WTC11 (cell line): ENCODE measurements at regions of chr20 and their contacts with region 1.

Region 1: DNA sequence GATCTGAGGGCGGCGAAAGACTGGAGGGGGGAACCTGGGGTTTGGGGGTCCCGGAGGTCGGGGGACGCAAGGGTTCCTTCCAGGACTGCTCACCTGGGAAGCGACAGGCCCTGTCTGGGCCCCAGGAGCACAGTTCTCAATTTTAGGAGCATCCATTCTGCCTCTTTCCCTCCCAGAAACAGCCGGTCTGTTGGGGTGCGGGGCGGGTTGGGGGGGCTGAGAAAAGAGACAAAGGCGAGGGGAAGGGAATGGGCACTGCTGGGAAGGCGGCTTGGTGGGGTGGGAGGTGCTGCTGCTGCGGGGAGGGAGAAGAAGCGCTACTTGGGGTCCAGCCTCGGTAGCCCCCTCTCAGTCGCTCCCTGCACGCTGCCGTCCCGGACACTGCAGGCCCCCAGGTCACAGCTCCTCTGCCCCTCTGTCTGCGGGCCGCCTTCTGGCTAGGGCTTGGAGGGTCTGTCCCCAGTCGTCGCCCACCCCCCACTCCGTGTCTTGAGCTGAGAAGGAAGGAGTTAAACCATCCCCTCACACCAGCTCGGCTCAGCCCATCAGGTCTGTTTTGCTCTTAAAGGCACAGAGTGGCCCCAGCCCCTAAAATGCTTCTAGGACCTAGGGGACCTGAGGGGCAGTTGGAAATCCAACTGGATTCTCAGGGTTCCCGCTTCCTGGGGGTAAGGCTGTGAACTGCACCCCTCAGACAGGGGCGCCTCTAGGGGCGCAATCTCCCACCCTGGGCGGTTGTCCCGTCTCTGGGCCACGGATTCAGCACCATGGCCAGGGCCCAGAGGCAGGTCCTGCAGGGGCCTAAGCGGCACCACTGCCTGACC is 690 bp downstream of the GDAP1L1 start:
- DNase-seq: peak; percentile 91
- ATAC-seq: peak; percentile 92
- H3K4me3 Mint-ChIP-seq: peak overlapping the region; percentile 78
- H3K27ac Mint-ChIP-seq: no peak overlapping the region
- H3K4me1 Mint-ChIP-seq: peaks cover 7% of the 10 kb centered on the region; the same call in 1 of the 2 replicates
- H3K27me3 Mint-ChIP-seq: peaks cover 13% of the 10 kb centered on the region
- CTCF ChIP-seq: peak; percentile 55; the same call in 1 of the 2 replicates

Region 2: GRCh38 chr20:44222633-44223368 is 25.0 kb before region 1 on chr20:
- CTCF ChIA-PET with region 1: interaction called, 25 read pairs
- POLR2A ChIA-PET with region 1: no interaction called
- DNase-seq: peak; percentile 64
- ATAC-seq: peak; percentile 94
- H3K4me3 Mint-ChIP-seq: no peak overlapping the region
- H3K27ac Mint-ChIP-seq: no peak overlapping the region; the same call in 1 of the 2 replicates
- H3K4me1 Mint-ChIP-seq: peaks cover 12% of the 10 kb centered on the region
- H3K27me3 Mint-ChIP-seq: no peaks in the 10 kb centered on the region
- CTCF ChIP-seq: no peak; the same call in 1 of the 2 replicates

Region 3: DNA sequence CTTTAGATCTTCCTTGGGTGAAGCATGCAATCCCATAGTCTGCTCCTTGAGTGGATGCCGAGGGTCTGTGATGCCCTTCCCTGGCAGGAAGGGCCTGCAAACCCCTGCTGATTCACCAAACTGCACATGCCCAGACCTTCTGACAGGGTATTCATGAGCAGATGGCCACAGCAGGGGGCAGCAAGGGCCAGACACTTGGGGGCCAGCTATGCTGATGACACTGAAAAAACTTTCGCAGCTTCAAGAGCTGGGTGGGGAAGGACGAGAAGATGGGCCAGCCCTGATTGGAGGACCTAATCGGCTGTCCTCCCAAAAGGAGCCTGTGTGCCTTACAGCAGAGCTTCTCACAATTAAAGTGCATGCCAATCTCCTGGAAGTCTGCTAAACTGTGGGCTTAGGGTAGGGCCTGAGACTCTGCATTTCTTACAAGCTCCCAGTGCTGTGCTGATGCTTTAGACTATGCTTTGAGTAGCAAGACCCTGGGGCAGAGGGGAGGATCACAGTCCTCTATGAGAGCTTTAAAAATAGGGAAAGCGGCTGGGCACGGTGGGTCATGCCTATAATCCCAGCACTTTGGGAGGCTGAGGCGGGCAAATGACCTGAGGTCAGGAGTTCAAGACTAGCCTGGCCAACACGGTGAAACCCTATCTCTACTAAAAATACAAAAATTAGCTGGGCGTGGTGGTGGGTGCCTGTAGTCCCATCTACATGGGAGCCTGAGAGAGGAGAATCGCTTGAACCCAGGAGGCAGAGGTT is 15.9 kb before region 1 on chr20:
- CTCF ChIA-PET with region 1: interaction called, 10 read pairs
- POLR2A ChIA-PET with region 1: interaction called, 3 read pairs
- DNase-seq: peak; percentile 46
- ATAC-seq: peak; percentile 75
- H3K4me3 Mint-ChIP-seq: no peak overlapping the region
- H3K27ac Mint-ChIP-seq: peak overlapping the region; percentile 79; the same call in 1 of the 2 replicates
- H3K4me1 Mint-ChIP-seq: peaks cover 19% of the 10 kb centered on the region
- H3K27me3 Mint-ChIP-seq: no peaks in the 10 kb centered on the region
- CTCF ChIP-seq: no peak

Region 4: DNA sequence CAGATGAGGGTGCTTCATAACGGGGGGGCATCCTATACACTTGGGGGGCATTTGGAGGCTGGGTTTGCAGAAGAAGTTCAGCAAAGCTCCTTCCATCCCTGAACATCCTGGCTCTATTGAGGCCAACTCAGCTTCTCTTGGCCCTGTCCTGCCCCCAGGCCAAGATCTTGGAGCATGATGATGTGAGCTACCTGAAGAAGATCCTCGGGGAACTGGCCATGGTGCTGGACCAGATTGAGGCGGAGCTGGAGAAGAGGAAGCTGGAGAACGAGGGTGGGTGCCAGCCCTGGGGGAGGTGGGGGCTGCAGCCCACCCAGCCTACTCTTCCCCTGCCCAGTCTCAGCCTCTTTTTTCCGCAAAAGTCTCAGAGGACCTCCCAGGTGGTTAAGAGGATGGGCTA is 16.5 kb after region 1 on chr20:
- CTCF ChIA-PET with region 1: interaction called, 29 read pairs
- POLR2A ChIA-PET with region 1: interaction called, 4 read pairs
- DNase-seq: peak; percentile 49
- ATAC-seq: no peak; the same call in 1 of the 2 replicates
- H3K4me3 Mint-ChIP-seq: no peak overlapping the region
- H3K27ac Mint-ChIP-seq: no peak overlapping the region
- H3K4me1 Mint-ChIP-seq: no peaks in the 10 kb centered on the region
- H3K27me3 Mint-ChIP-seq: no peaks in the 10 kb centered on the region
- CTCF ChIP-seq: no peak

Region 5: GRCh38 chr20:44350567-44350966 is 102.8 kb after region 1 on chr20:
- CTCF ChIA-PET with region 1: no interaction called
- POLR2A ChIA-PET with region 1: no interaction called
- DNase-seq: no peak
- ATAC-seq: no peak
- H3K4me3 Mint-ChIP-seq: no peak overlapping the region
- H3K27ac Mint-ChIP-seq: no peak overlapping the region
- H3K4me1 Mint-ChIP-seq: 0 out of 2 replicates have a peak, but pooled peaks cover 4% of the 10 kb centered on the region
- H3K27me3 Mint-ChIP-seq: no peaks in the 10 kb centered on the region
- CTCF ChIP-seq: no peak